ENCODE measurements at regions of chr6 and their contacts with region 1.

Region 1: DNA sequence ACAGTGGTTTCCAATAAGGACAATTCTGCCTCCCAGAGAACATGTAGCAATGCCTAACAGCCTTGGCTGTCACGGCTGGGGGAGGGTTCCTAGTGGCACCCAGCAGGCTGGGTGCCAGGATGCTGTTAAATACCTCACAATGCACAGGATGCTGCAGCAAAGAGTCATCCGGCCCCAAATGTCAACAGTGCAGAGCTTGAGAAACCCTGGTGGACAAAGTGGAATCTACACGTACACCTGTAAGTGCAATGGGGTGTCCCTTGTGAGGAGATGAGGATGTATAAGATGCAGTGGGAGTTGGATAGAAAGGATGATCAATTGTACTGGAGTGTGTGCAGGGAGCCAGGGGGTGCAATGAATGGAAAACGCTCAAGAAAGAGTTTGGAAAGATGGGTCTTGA is 142.4 kb downstream of the FNDC1 start:
- DNase-seq: peak in 1 of 2 donors; percentile 59
- ATAC-seq: no peak
- H3K4me3 ChIP-seq: no peak overlapping the region
- H3K27ac ChIP-seq: peak overlapping the region in 1 of 2 donors; percentile 52
- H3K4me1 ChIP-seq: peaks cover 4 to 14% of the 10 kb centered on the region in 2 donors
- H3K27me3 ChIP-seq: no peaks in the 10 kb centered on the region

Region 2: DNA sequence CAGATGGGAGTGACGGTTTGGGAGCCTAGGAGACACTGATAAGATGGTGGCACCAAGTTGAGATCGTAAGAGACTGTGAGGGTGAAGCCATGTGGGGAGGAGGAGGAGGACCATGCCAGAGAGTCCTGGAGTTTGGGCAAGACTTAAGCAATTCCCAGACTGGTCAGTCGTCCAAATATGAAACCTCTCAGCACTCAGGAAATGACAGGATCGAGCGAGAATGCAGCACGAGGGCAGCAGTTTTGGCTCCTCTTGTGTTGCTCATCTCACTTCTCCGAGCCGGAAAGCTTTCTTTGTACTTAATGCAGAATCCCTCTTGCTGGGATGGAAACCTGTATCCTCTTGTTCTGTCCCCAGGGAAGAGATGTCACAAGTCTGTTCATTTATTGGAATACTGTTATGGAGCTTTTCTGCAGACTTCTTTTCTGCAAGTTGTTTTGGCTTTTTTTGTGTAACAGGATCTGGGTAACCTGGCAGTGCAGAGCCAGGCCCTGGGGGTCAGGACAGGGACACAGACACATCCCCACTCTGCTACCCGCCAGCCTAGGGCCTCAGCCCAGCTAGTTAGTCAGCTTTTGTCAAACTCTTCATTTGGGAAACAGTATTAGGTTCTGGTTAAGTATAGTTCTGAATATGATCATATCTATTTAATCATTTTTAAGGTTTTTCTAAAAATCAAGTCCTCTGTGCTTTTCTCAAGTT is 108.2 kb before region 1 on chr6:
- intact Hi-C with region 1: no loop called
- DNase-seq: peak in 1 of 2 donors; percentile 71
- ATAC-seq: peak; percentile 66
- H3K4me3 ChIP-seq: no peak overlapping the region
- H3K27ac ChIP-seq: peak overlapping the region; percentile 83 to 90
- H3K4me1 ChIP-seq: peaks cover 0 to 4% of the 10 kb centered on the region in 2 donors
- H3K27me3 ChIP-seq: no peaks in the 10 kb centered on the region

Region 3: GRCh38 chr6:159233365-159234101 is 78.1 kb before region 1 on chr6:
- intact Hi-C with region 1: no loop called
- DNase-seq: peak in 1 of 2 donors; percentile 67
- ATAC-seq: peak; percentile 46
- H3K4me3 ChIP-seq: no peak overlapping the region
- H3K27ac ChIP-seq: no peak overlapping the region
- H3K4me1 ChIP-seq: no peaks in the 10 kb centered on the region
- H3K27me3 ChIP-seq: no peaks in the 10 kb centered on the region

Region 4: DNA sequence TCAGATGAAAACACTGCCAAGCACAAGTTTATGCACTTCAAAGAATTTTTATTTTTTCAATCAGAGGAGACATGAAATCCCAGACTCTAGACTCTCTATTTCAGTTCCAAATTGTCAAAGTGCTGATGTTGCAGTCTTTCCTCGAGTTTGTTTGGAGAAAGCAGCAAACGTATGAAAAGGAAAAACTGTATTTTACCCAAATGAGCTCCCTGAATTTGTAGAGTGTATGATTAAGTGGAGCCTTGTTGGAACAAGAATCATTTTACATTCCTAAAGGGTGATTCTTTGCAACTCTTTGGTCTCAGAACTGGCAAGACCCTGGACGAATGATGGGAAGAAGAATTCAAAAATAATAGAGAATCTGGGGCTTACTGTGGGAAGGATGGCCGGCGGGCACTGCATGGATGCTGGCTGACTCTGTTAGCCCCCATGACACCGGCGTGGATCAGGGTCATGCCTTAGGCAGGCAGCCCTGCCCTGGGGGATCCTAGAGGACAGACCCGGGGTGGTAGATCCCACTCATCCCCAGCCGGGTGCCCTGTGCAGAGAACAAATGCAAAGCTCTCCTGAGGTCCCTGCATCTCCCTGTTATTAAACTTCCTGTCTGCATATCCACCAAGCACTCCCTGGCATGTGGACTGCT is 65.0 kb after region 1 on chr6:
- intact Hi-C with region 1: loop called in 1 of 2 experiments (anchors 5 kb)
- DNase-seq: no peak
- ATAC-seq: peak; percentile 53
- H3K4me3 ChIP-seq: no peak overlapping the region
- H3K27ac ChIP-seq: peak overlapping the region; percentile 56 to 84
- H3K4me1 ChIP-seq: no peaks in the 10 kb centered on the region
- H3K27me3 ChIP-seq: no peaks in the 10 kb centered on the region

Region 5: GRCh38 chr6:159505140-159505922 is 193.7 kb after region 1 on chr6:
- intact Hi-C with region 1: no loop called
- DNase-seq: peak; percentile 75 to 83
- ATAC-seq: peak; percentile 78
- H3K4me3 ChIP-seq: no peak overlapping the region
- H3K27ac ChIP-seq: peak overlapping the region; percentile 9 to 45
- H3K4me1 ChIP-seq: no peaks in the 10 kb centered on the region
- H3K27me3 ChIP-seq: no peaks in the 10 kb centered on the region